Activated CD8-positive, alpha-beta T cell treated with anti-CD3 and anti-CD28 coated beads, Interleukin-2, amount 10 ng/mL, durations not matched to agents 7 days and 5 days (primary cell): ENCODE measurements at regions of chr3 and their contacts with region 1.

Region 1: GRCh38 chr3:13452490-13453335 is 27.4 kb upstream of the HDAC11 start:
- DNase-seq: peak; percentile 71
- ATAC-seq: no peak
- H3K4me3 Mint-ChIP-seq: peak overlapping the region; percentile 89
- H3K27ac Mint-ChIP-seq: peak overlapping the region; percentile 86
- H3K4me1 Mint-ChIP-seq: peaks cover 27% of the 10 kb centered on the region
- H3K27me3 Mint-ChIP-seq: no peaks in the 10 kb centered on the region

Region 2: DNA sequence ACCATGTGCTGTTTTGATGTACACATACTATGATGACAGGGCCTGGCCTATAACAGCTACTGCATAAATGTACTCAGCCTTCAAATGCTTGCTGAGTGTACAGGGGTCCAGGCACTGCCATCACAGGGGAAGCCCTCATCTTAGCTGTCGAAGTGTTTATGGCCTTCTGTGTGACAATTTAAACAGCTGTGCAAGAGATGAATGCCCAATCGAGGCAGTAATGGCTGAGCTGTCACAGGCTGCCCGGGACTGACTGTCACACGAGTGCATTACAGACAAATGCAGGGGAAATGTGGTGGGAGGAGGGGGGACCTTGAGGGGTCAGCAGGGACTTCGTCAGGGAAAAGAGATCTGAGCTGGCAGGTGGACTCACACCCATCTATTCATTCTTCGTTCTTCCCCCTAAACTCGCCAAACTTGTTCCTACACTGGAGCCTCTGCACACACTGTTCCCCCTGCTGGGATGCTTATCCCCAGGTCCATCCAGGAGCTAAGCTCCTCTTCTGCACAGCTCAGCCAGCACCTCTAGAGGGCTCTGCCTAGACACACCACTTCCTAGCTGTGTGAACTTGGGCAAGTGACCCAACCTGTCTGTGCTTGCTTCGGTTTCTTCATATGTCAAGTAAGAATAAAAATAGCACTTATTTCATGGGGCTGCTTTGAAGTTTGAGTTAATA is 223.3 kb before region 1 on chr3:
- CTCF ChIA-PET with region 1: interaction called, 11 read pairs
- POLR2A ChIA-PET with region 1: no interaction called
- DNase-seq: peak; percentile 47
- ATAC-seq: peak; percentile 63
- H3K4me3 Mint-ChIP-seq: no peak overlapping the region
- H3K27ac Mint-ChIP-seq: no peak overlapping the region
- H3K4me1 Mint-ChIP-seq: peaks cover 15% of the 10 kb centered on the region
- H3K27me3 Mint-ChIP-seq: peaks cover 21% of the 10 kb centered on the region

Region 3: DNA sequence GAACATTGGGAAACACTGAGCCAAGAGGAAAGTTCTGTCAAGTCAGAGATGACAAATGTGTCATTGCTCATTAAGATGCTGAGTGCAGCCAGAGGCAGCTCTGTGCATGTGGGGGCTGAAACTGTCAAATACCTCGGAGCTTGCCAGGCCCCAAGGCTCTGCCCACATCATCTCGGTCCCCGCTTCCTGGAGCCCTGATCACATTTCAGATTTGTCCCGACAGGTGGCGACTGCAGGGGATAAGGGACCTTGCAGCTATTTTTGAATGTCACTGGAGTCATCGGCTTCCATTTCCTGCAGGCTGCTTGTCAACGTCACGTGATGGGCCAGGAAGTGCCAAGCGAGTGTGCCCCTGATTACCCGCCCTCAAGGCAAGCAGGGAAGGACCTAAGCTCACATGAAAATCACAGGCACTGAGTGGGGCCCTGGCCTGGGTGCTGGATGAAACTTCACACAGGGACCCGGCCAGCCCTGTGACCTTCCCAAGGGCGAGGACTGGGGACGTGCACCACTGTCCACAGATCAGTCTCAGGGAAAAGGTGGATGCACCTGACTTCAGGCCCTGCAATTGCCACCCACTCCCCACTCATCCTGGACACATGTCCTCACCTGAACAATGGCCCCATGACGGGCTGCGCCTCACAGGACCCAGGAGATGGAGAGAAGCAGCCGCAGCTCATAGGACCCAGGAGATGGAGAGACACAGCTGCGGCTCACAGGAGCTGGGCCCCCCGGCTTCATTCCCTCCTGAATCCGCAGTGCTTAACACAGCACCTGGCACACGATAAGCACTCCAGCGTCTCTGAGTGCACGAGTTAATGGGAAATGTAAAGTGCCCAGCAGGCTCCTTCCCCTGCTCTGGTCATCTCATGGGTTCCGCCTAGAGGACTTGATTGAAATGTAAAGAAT is 106.0 kb before region 1 on chr3:
- CTCF ChIA-PET with region 1: interaction called, 168 read pairs
- POLR2A ChIA-PET with region 1: no interaction called
- DNase-seq: peak; percentile 87
- ATAC-seq: peak; percentile 80
- H3K4me3 Mint-ChIP-seq: peak overlapping the region; percentile 20
- H3K27ac Mint-ChIP-seq: peak overlapping the region; percentile 91
- H3K4me1 Mint-ChIP-seq: peaks cover 72% of the 10 kb centered on the region
- H3K27me3 Mint-ChIP-seq: no peaks in the 10 kb centered on the region

Region 4: GRCh38 chr3:13391308-13391707 is 61.4 kb before region 1 on chr3:
- CTCF ChIA-PET with region 1: interaction called, 54 read pairs
- POLR2A ChIA-PET with region 1: interaction called, 3 read pairs
- DNase-seq: no peak
- ATAC-seq: peak; percentile 24
- H3K4me3 Mint-ChIP-seq: no peak overlapping the region
- H3K27ac Mint-ChIP-seq: no peak overlapping the region
- H3K4me1 Mint-ChIP-seq: peaks cover 27% of the 10 kb centered on the region
- H3K27me3 Mint-ChIP-seq: no peaks in the 10 kb centered on the region

Region 5: DNA sequence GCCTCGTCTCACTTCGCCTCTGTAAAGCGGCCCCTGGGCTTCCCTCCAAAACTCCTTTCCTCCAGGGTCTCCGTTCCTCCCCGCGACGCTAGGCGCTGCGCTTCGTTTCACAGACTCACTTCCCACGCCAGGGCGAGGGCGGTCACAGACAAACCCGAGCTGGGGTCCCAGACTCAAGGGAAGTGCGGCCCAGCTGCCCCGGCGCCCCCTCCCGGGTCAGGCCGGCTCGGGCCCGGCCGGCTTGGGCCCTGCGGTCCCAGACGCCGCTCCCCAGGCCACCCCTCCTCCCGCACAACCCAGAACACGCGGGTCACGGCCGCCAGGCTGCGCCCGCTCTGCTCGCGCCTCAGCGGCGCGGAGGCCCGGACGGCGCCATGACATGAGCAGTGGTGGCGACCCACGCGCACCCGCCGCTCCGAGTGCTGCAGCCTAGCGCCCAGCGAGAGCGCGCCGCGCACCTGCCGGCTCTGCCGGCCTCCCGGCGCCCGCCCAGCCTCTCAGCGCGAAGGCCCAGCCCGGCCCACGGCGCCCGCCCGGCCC is 33.1 kb before region 1 on chr3:
- CTCF ChIA-PET with region 1: interaction called, 169 read pairs
- POLR2A ChIA-PET with region 1: interaction called, 26 read pairs
- DNase-seq: peak; percentile 63
- ATAC-seq: peak; percentile 62
- H3K4me3 Mint-ChIP-seq: peak overlapping the region; percentile 91
- H3K27ac Mint-ChIP-seq: peak overlapping the region; percentile 90
- H3K4me1 Mint-ChIP-seq: peaks cover 68% of the 10 kb centered on the region
- H3K27me3 Mint-ChIP-seq: no peaks in the 10 kb centered on the region

Region 6: GRCh38 chr3:13440204-13440817 is 12.4 kb before region 1 on chr3:
- CTCF ChIA-PET with region 1: interaction called, 15 read pairs
- POLR2A ChIA-PET with region 1: no interaction called
- DNase-seq: no peak
- ATAC-seq: no peak
- H3K4me3 Mint-ChIP-seq: no peak overlapping the region
- H3K27ac Mint-ChIP-seq: no peak overlapping the region
- H3K4me1 Mint-ChIP-seq: no peaks in the 10 kb centered on the region
- H3K27me3 Mint-ChIP-seq: peaks cover 12% of the 10 kb centered on the region